Tibial artery (tissue), 4 donors: ENCODE measurements at regions of chr12 and their contacts with region 1.

Region 1: DNA sequence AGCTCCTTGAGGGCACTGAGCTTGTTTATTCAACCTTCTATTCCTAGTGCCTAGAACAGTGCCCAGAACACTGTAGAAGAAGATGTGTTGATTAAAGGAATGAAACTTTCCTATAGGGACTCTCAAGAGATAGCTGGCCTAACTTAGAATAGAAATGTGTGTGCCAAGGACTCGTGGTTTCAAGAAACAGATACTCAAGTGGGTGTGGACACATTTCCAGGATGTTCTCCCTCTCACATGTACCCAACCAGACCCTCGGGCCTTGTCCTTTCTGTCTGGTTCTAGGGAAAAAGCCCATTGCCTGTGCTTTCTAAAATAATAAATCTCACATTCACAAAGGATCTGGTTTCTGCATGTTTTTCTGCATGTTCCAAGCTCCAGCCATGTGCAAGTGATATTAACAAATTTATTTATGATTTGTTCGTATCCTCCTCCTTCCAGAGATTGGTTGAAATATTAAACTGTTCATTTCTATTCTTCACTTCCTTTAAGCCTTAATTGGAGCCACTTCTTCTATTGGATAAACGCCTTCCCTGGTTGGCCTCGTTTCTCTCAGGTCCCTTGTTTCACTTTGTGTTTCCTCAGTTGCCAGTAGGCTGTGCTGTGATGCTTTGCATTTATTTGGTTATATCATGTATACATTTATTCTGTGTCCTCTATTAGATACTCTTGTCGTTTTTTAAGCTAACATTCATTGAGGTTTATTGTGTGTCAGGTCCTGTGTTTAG is 89.8 kb downstream of the CRADD start:
- DNase-seq: peak in 1 of 2 donors; percentile 32
- H3K4me3 ChIP-seq: no peak overlapping the region
- H3K27ac ChIP-seq: peak overlapping the region; percentile 15 to 23
- H3K4me1 ChIP-seq: peaks cover 0 to 9% (median 3%) of the 10 kb centered on the region in 4 donors
- H3K27me3 ChIP-seq: no peaks in the 10 kb centered on the region
- CTCF ChIP-seq: peak; percentile 59 to 64

Region 2: GRCh38 chr12:93634416-93634815 is 132.5 kb before region 1 on chr12:
- intact Hi-C with region 1: no loop called
- DNase-seq: no peak
- H3K4me3 ChIP-seq: no peak overlapping the region
- H3K27ac ChIP-seq: no peak overlapping the region
- H3K4me1 ChIP-seq: no peaks in the 10 kb centered on the region
- H3K27me3 ChIP-seq: no peaks in the 10 kb centered on the region
- CTCF ChIP-seq: no peak

Region 3: GRCh38 chr12:93979189-93979588 is 212.2 kb after region 1 on chr12:
- intact Hi-C with region 1: loop called (anchors 10 kb)
- DNase-seq: no peak
- H3K4me3 ChIP-seq: no peak overlapping the region
- H3K27ac ChIP-seq: no peak overlapping the region
- H3K4me1 ChIP-seq: peaks cover 0 to 9% (median 0%) of the 10 kb centered on the region in 4 donors
- H3K27me3 ChIP-seq: no peaks in the 10 kb centered on the region
- CTCF ChIP-seq: peak in 1 of 2 experiments; percentile 31

Region 4: DNA sequence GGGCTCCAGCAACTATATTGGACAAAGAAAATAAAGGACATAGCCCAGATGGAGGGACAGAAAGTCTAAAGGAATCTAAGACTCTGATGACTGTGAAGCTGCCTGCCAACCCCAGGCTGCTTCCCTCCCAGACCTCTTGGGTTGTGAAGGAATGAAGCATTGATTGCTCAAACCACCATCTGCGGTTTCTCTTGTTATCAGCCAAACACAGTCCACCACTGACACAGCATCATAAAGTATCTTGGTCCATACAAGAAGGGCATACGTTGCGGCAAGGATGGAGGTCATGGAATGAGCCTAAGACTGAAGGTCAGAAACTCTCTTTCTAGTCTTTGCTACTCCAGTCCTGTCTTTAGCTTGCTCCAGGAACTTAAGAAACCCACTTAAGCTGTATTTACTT is 322.9 kb after region 1 on chr12:
- intact Hi-C with region 1: loop called (anchors 5 kb)
- DNase-seq: no peak
- H3K4me3 ChIP-seq: no peak overlapping the region
- H3K27ac ChIP-seq: no peak overlapping the region
- H3K4me1 ChIP-seq: peaks cover 0 to 3% (median 0%) of the 10 kb centered on the region in 4 donors
- H3K27me3 ChIP-seq: no peaks in the 10 kb centered on the region
- CTCF ChIP-seq: no peak

Region 5: DNA sequence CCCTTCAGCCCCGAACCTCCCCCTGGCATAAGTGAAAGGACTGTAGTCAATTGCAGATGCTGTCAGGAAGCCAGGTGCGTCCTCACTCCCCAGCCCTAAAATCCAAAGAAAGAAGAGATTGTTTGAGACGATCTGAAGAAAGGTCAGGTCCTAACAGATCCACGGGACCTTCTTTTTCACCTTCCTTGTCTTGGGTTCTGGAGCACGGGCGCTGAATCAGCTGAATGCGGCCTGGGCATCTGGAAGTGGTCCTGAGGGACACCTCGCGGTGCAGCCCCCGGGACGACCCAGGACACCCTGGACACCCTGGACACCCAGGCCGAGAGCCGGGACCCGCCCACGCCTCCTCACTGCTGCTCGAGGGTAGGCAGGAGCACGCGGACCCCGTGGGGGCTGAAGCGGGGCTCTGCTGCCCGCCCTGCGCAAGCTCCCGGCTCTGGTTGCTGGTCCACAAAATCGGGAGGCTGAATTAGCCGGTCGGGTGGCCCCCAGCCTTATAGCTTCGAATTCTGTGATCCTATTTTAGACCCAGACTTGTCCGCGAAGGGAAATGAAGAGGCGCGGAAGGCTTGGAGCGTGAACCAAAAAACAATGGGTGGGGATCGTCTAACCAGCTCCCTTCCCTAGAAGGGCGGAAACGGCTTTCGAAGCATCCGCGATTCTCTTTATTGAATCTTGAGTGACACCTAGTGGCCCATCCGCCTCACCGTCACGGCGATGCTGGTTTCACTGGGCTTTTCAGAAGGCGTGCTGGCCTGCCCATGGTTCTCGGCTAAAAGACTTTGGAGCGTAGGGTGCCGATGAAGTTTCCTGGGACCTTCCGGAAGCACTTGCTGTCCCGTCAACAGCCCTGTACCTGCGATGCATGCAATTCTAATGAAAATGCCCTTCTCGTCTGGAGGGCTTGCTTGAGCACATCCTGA is 335.0 kb after region 1 on chr12:
- intact Hi-C with region 1: loop called (anchors 2 kb)
- DNase-seq: peak; percentile 90 to 92
- H3K4me3 ChIP-seq: peak overlapping the region; percentile 54 to 73
- H3K27ac ChIP-seq: peak overlapping the region; percentile 38 to 39
- H3K4me1 ChIP-seq: peaks cover 0 to 12% (median 4%) of the 10 kb centered on the region in 4 donors
- H3K27me3 ChIP-seq: peaks cover 0 to 18% of the 10 kb centered on the region in 2 donors
- CTCF ChIP-seq: peak; percentile 79 to 83